Activated T-helper 1 cell treated with anti-CD3 and anti-CD28 coated beads, Interleukin-12 subunit alpha, Interleukin-12 subunit beta, Interleukin-2, Interleukin-4 antibody, amounts not matched to agents 30 ng/mL and 10 ng/mL and 1 ng/mL, durations not matched to agents 14 hours and 24 hours and 36 hours (primary cell): ENCODE measurements at regions of chr7 and their contacts with region 1.

Region 1: GRCh38 chr7:74709880-74710671 is 52.6 kb downstream of the GTF2I start:
- DNase-seq: no peak
- H3K4me3 Mint-ChIP-seq: no peak overlapping the region
- H3K27ac Mint-ChIP-seq: no peak overlapping the region
- H3K4me1 Mint-ChIP-seq: peaks cover 4% of the 10 kb centered on the region
- H3K27me3 Mint-ChIP-seq: no peaks in the 10 kb centered on the region

Region 2: GRCh38 chr7:74665296-74665938 is 44.7 kb before region 1 on chr7:
- intact Hi-C with region 1: loop called (anchors 10 kb)
- DNase-seq: no peak
- H3K4me3 Mint-ChIP-seq: no peak overlapping the region
- H3K27ac Mint-ChIP-seq: no peak overlapping the region
- H3K4me1 Mint-ChIP-seq: peaks cover 30% of the 10 kb centered on the region
- H3K27me3 Mint-ChIP-seq: no peaks in the 10 kb centered on the region